ENCODE measurements at regions of chr4 and their contacts with region 1.

Region 1: DNA sequence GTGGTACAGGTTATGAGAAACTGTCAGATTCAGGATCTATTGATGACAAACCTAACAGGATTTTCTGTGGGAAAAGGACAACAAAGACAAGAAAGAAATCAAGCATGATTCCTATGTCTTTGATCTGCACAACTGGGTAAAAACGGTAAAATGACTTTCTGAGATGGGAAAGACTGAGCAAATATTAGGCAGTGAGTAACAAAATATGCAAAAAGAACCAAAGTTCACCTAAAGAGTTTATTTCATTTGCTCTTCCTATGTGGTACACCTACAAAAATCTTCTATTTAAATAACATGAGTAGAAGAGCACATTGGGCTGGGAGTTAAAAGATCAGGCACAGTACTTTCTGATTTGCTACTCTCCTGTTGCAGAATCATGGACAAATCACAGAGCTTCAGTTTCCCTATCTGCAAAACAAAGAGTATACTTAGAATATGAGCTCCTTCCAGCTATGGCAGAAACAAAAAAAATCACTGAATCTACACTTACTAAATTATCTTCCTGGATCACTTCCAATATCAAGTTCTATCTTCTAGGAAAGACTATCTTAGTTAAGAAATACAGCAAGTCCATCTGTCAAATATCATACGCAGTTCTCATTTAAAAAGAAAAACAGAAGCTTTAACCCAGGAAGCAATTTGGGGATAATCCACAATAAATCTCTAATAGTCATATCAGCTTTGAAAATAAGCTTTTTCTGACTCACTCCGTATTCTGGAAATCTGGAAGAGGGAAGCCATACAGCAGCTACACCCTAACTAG is 37.4 kb downstream of the NFXL1 start:
- DNase-seq: no peak
- H3K4me3 ChIP-seq: no peak overlapping the region
- H3K27ac ChIP-seq: no peak overlapping the region
- H3K27me3 ChIP-seq: no peaks in the 10 kb centered on the region
- CTCF ChIP-seq: no peak

Region 2: GRCh38 chr4:48071121-48071612 is 194.2 kb after region 1 on chr4:
- CTCF ChIA-PET with region 1: interaction called, 10 read pairs
- POLR2A ChIA-PET with region 1: no interaction called
- DNase-seq: no peak
- H3K4me3 ChIP-seq: no peak overlapping the region
- H3K27ac ChIP-seq: no peak overlapping the region
- H3K27me3 ChIP-seq: no peaks in the 10 kb centered on the region
- CTCF ChIP-seq: no peak